Upper lobe of right lung (tissue), 1 donor: ENCODE measurements at regions of chr7 and their contacts with region 1.

Region 1: GRCh38 chr7:73606801-73607691 is 17.3 kb downstream of the MLXIPL start:
- DNase-seq: peak; percentile 78
- ATAC-seq: peak; percentile 83
- H3K4me3 ChIP-seq: no peak overlapping the region
- H3K27ac ChIP-seq: no peak overlapping the region
- H3K4me1 ChIP-seq: no peaks in the 10 kb centered on the region
- H3K27me3 ChIP-seq: peaks cover 15% of the 10 kb centered on the region
- CTCF ChIP-seq: peak; percentile 96

Region 2: GRCh38 chr7:73423519-73424488 is 183.2 kb before region 1 on chr7:
- intact Hi-C with region 1: no loop called
- DNase-seq: no peak
- ATAC-seq: peak; percentile 62
- H3K4me3 ChIP-seq: peak overlapping the region; percentile 19
- H3K27ac ChIP-seq: no peak overlapping the region
- H3K4me1 ChIP-seq: no peaks in the 10 kb centered on the region
- H3K27me3 ChIP-seq: peaks cover 8% of the 10 kb centered on the region
- CTCF ChIP-seq: no peak

Region 3: GRCh38 chr7:73726083-73726466 is 119.0 kb after region 1 on chr7:
- intact Hi-C with region 1: loop called (anchors 5 kb)
- DNase-seq: no peak
- ATAC-seq: peak; percentile 20
- H3K4me3 ChIP-seq: no peak overlapping the region
- H3K27ac ChIP-seq: no peak overlapping the region
- H3K4me1 ChIP-seq: no peaks in the 10 kb centered on the region
- H3K27me3 ChIP-seq: peaks cover 7% of the 10 kb centered on the region
- CTCF ChIP-seq: peak; percentile 4